ENCODE measurements at regions of chr11 and their contacts with region 1.

Region 1: DNA sequence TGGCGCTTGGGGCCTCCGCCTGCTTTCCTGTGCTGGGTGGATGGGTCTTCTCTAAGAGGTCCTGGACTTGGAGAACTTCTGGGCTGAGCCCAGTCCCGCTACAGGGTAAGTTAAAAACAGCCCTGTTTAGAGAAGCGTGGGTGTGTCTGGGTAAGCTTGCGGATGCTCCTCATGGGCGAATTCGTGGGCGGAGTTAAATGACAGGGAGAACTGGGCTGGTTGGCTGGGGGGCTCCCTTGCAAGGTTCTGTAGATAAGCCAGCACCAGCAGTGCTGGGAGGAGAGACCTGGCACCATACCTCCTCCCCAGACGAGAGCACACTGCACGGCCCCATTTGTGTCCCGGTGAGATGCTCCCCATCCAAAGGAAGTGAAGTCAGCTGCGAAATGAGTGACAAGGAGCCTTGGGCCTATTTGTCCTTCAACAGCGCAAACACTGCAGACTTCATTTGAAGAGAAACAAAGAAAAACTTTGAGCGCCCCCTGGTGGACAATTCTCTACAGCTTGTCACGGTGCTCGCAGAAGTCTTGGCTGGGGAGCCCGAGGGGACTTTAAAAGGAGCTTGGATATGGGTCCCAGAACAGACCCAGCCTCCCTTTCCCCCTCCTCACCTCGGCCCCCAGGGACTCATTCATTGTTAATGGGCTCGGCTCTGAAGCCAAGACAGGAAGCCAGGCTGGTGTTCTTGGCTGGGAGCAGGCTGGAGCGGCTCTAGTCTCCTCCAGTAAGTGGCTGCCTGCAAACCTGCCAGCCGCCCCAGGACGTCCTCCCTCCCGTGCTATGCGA is 39.5 kb downstream of the TP53I11 start:
- DNase-seq: peak; percentile 67 to 95
- ATAC-seq: peak; percentile 73 to 93 (median 82)
- H3K4me3 ChIP-seq: peak overlapping the region in 3 of 10 donors; percentile 2 to 19 (median 10)
- H3K27ac ChIP-seq: peak overlapping the region in 8 of 10 donors; percentile 6 to 62 (median 30)
- H3K4me1 ChIP-seq: peaks cover 10 to 68% (median 37%) of the 10 kb centered on the region in 9 donors
- H3K27me3 ChIP-seq: no peaks in the 10 kb centered on the region
- CTCF ChIP-seq: peak; percentile 83 to 95 (median 91)

Region 2: GRCh38 chr11:44551456-44552139 is 359.6 kb before region 1 on chr11:
- intact Hi-C with region 1: loop called in 5 of 10 experiments (anchors 2 to 10 kb)
- DNase-seq: no peak
- ATAC-seq: no peak
- H3K4me3 ChIP-seq: no peak overlapping the region
- H3K27ac ChIP-seq: no peak overlapping the region
- H3K4me1 ChIP-seq: peaks cover 0 to 2% (median 0%) of the 10 kb centered on the region in 9 donors
- H3K27me3 ChIP-seq: no peaks in the 10 kb centered on the region
- CTCF ChIP-seq: no peak

Region 3: GRCh38 chr11:44621140-44621681 is 290.0 kb before region 1 on chr11:
- intact Hi-C with region 1: loop called (anchors 1 to 5 kb)
- DNase-seq: peak; percentile 76 to 83
- ATAC-seq: peak; percentile 62 to 82 (median 70)
- H3K4me3 ChIP-seq: peak overlapping the region in 6 of 10 donors; percentile 10 to 39 (median 33)
- H3K27ac ChIP-seq: no peak overlapping the region
- H3K4me1 ChIP-seq: peaks cover 12 to 54% (median 37%) of the 10 kb centered on the region in 9 donors
- H3K27me3 ChIP-seq: no peaks in the 10 kb centered on the region
- CTCF ChIP-seq: peak; percentile 97 to 99 (median 98)

Region 4: GRCh38 chr11:44893846-44894617 is 17.2 kb before region 1 on chr11:
- intact Hi-C with region 1: no loop called
- DNase-seq: peak; percentile 73 to 82
- ATAC-seq: peak; percentile 90 to 95 (median 92)
- H3K4me3 ChIP-seq: no peak overlapping the region
- H3K27ac ChIP-seq: peak overlapping the region in 9 of 10 donors; percentile 17 to 68 (median 42)
- H3K4me1 ChIP-seq: peaks cover 0 to 39% (median 18%) of the 10 kb centered on the region in 9 donors
- H3K27me3 ChIP-seq: no peaks in the 10 kb centered on the region
- CTCF ChIP-seq: peak; percentile 78 to 94 (median 90)